Posterior vena cava (tissue), 2 donors: ENCODE measurements at regions of chr5 and their contacts with region 1.

Region 1: GRCh38 chr5:112077180-112077579 is 320.2 kb upstream of the NREP start:
- DNase-seq: no peak

Region 2: DNA sequence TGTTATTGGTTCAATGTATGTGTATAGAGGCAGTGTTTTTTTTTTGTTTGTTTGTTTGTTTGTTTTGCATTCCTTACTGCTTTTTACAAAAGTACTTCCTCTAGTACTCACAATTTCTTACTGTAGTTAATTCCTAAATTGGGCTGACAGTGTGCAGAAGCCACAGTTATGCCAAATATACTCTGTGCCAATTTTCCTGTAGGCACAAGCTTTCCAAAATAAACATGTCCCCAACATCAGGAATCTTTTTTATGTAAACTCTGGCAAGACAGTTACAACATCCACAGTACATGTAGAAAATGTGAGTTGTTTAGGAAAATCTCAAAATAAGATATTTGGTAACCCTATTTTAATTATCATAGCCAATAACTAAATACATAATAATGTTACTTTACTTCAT is 1167.2 kb before region 1 on chr5:
- intact Hi-C with region 1: no loop called
- DNase-seq: no peak

Region 3: DNA sequence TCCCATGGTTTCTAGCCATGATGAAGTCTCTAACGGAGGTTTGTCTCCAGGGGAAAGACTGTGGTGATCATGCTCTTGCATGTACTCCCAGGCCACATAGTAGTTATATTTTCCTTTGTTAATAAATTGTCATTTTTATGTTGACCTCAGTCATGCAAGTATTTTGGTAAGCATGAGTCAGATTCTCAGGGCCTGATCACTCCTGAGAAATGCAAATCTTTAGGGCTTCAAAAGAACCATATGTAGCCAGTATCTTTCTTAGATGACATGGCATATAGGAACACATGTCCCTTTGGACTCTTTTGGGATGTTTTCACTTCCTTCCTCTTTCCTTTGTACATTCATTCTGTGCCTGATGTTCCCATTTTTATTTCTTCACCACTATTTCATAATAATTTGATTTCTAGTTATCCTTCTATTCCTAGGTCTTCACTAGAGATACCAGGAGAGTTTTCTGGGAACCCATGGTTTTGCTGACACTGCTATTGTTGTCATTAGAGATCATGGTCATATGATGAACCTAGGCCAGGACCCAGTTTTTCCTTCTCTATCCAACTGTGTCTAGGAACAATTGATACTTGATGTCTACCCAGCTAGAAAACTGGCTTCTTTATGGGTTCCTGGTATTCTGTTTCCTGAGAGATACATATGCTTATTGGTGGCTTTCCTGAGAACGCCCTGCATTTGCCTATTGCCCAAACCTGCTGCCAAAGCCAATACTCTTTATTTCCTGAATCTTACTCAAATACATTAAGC is 72.1 kb before region 1 on chr5:
- intact Hi-C with region 1: loop called in 1 of 2 experiments (anchors 2 kb)
- DNase-seq: no peak